ENCODE measurements at regions of chr5 and their contacts with region 1.

Region 1: DNA sequence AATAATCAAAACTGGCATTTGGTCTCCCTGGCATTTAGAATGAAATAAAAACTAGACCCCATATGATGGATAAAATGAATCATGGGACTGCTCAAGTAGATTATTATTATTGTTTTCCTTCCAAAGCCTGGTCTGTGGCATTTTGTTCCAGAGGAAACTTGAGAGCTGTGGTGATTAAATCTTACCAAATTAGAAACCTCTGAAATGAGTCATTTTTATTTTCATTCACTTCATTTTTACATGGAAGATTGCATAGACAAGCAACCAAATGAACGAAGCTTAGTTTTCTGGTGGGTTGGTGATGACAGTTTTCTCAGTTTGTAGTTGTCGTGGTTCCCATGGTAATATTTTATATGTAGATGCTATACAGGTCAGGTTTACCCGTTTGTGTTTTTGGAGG is 23.4 kb downstream of the PAM start:
- DNase-seq: no peak
- ATAC-seq: peak; percentile 68
- H3K4me3 ChIP-seq: no peak overlapping the region
- H3K27ac ChIP-seq: peak overlapping the region in 1 of 2 donors; percentile 67
- H3K4me1 ChIP-seq: peaks cover 7 to 9% of the 10 kb centered on the region in 2 donors
- H3K27me3 ChIP-seq: no peaks in the 10 kb centered on the region

Region 2: DNA sequence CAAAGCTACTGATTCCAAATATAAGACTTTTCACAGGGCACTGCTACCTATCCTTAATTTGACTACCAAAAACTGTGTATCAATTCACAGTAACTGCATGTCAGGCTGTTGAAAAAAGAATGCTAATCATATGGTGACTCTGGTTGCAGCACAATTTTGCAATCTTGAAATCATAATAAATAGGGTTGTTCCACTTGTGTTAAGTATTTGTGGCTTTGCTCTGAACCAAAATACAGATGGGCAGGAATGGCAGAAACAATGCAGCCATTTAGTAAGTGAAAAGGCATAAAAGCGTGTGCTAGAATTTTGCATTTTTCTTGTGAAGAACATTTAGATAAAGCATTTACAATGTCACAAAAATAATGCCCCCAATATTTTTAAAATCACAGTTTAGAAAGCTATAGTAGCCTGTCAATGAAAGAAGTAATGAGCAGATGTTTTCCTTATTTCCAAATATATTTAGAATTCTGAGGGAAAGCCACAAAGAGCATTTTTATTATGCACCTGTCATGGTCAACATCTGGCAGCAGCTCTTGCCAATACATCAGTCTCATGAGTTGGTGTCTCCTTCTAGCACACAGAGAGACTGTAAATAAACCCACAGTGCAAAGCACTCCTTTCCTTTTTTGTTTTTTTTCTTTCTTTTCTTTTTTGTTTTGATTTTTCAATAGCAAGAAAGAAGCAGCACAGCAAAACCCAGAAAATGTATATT is 78.2 kb before region 1 on chr5:
- intact Hi-C with region 1: no loop called
- DNase-seq: no peak
- ATAC-seq: no peak
- H3K4me3 ChIP-seq: no peak overlapping the region
- H3K27ac ChIP-seq: no peak overlapping the region
- H3K4me1 ChIP-seq: no peaks in the 10 kb centered on the region
- H3K27me3 ChIP-seq: no peaks in the 10 kb centered on the region

Region 3: GRCh38 chr5:102875721-102876123 is 97.2 kb after region 1 on chr5:
- intact Hi-C with region 1: no loop called
- DNase-seq: no peak
- ATAC-seq: no peak
- H3K4me3 ChIP-seq: no peak overlapping the region
- H3K27ac ChIP-seq: no peak overlapping the region
- H3K4me1 ChIP-seq: peaks cover 0 to 5% of the 10 kb centered on the region in 2 donors
- H3K27me3 ChIP-seq: no peaks in the 10 kb centered on the region

Region 4: DNA sequence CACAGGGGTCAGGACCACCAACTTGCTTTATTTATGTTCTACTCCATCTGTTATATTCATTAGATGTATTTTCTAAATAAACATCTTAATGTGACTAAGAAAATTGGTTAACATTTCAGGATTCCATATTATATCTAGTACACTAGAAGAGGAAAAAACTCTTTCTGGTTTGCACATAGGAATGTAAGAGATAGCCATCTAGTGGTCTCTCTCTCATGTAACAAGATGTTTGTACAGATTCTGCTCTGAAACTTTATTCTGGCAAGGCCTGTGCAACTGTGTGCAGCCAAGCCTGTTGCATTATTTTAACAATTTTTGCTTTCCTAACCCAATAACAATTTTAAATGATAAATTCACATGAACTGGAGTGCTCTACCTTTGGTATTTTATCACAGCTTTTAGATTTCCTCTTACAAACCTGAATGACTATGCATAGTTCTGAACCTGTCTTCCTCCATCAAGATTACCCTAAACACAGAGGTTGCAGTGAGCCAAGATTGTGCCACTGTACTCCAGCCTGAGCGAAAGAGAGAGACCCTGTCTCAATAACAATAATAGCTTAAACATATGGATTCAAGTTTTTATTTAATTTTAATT is 193.3 kb after region 1 on chr5:
- intact Hi-C with region 1: loop called (anchors 5 kb)
- DNase-seq: no peak
- ATAC-seq: peak; percentile 74
- H3K4me3 ChIP-seq: no peak overlapping the region
- H3K27ac ChIP-seq: no peak overlapping the region
- H3K4me1 ChIP-seq: peaks cover 0 to 8% of the 10 kb centered on the region in 2 donors
- H3K27me3 ChIP-seq: no peaks in the 10 kb centered on the region

Region 5: DNA sequence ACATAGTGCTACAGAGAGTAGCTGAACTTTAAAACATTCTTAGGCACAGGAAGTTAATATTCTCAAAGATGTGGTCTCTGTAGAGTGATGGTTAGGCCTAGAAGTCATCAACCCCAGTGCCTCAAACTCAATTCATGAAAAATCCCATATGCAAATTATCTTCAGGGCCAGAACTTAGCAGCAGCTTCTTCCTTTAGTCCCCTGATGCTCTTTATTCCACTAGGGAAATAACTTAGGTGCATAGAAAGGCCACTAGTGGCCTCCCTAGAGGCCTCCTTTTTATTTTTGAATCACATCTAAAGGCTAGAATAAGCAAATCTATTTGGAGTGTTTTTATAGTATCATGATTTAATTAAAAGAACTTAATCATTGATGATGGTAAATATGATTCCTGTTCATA is 253.1 kb after region 1 on chr5:
- intact Hi-C with region 1: loop called in 1 of 2 experiments (anchors 10 kb)
- DNase-seq: no peak
- ATAC-seq: no peak
- H3K4me3 ChIP-seq: no peak overlapping the region
- H3K27ac ChIP-seq: no peak overlapping the region
- H3K4me1 ChIP-seq: no peaks in the 10 kb centered on the region
- H3K27me3 ChIP-seq: no peaks in the 10 kb centered on the region

Region 6: GRCh38 chr5:103139264-103139865 is 360.9 kb after region 1 on chr5:
- intact Hi-C with region 1: loop called in 1 of 2 experiments (anchors 10 kb)
- DNase-seq: peak; percentile 76 to 81
- ATAC-seq: peak; percentile 92
- H3K4me3 ChIP-seq: no peak overlapping the region
- H3K27ac ChIP-seq: no peak overlapping the region
- H3K4me1 ChIP-seq: no peaks in the 10 kb centered on the region
- H3K27me3 ChIP-seq: no peaks in the 10 kb centered on the region